ENCODE measurements at regions of chr3 and their contacts with region 1.

Region 1: DNA sequence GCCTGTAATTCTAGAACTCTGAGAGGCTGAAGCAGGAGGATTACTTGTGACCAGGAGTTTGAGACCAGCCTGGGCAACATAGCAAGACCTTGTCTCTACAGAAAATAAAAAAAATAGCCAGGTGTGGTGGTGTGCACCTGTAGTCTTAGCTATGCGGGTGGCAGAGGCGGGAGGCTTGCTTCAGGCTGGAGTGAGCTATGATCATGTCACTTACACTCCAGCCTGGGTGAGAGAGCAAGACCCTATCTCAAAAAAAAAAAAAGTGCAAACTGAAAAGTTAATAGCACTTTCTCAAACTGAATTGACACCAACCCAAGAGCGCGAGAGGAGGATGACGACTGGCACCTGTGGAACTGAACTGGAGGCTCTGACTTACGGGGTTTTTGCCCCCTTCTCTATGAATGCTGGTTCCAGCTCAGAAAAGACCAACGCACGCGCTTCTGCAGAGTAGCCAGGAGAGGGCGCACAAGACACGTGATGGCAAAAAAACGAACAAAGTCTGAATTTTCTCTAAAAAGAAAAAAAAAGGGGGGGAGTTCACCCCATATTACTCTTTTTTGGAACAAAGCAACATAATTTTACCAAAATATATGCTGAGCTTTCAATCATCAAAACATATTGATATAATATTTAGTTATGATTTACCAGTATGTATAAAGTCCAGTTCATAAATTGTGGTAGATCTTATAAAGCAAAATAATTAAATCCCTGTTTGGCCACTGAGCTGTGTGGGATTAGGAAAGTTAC is 23.7 kb downstream of the CFAP92 start:
- DNase-seq: no peak
- ATAC-seq: peak; percentile 82
- H3K4me3 ChIP-seq: no peak overlapping the region
- H3K27ac ChIP-seq: no peak overlapping the region
- H3K4me1 ChIP-seq: no peaks in the 10 kb centered on the region
- H3K27me3 ChIP-seq: peaks cover 0 to 2% of the 10 kb centered on the region in 2 experiments; a peak in 1 of 4 replicates
- CTCF ChIP-seq: peak; percentile 87 to 91 (median 89)
- EP300 ChIP-seq: no peak
- POLR2A ChIP-seq: no peak
- RAD21 ChIP-seq: peak; percentile 94

Region 2: GRCh38 chr3:128598884-128599664 is 371.1 kb before region 1 on chr3:
- CTCF ChIA-PET with region 1: no interaction called
- POLR2A ChIA-PET with region 1: no interaction called
- RAD21 ChIA-PET with region 1: no interaction called
- SMC1A ChIA-PET with region 1: no interaction called
- in situ Hi-C with region 1: no loop called
- intact Hi-C with region 1: no loop called
- DNase-seq: no peak
- ATAC-seq: no peak
- H3K4me3 ChIP-seq: no peak overlapping the region
- H3K27ac ChIP-seq: no peak overlapping the region
- H3K4me1 ChIP-seq: no peaks in the 10 kb centered on the region; the same call in 1 of the 2 replicates
- H3K27me3 ChIP-seq: no peaks in the 10 kb centered on the region
- CTCF ChIP-seq: no peak
- EP300 ChIP-seq: no peak
- POLR2A ChIP-seq: no peak
- RAD21 ChIP-seq: no peak

Region 3: GRCh38 chr3:128984596-128984995 is 14.4 kb after region 1 on chr3:
- CTCF ChIA-PET with region 1: interaction called, 17 read pairs
- POLR2A ChIA-PET with region 1: no interaction called
- RAD21 ChIA-PET with region 1: interaction called, 5 read pairs
- SMC1A ChIA-PET with region 1: interaction called, 3 read pairs
- in situ Hi-C with region 1: no loop called
- intact Hi-C with region 1: no loop called
- DNase-seq: no peak
- ATAC-seq: no peak
- H3K4me3 ChIP-seq: no peak overlapping the region
- H3K27ac ChIP-seq: no peak overlapping the region
- H3K4me1 ChIP-seq: no peaks in the 10 kb centered on the region
- H3K27me3 ChIP-seq: peaks cover 0 to 1% of the 10 kb centered on the region in 2 experiments; a peak in 1 of 4 replicates
- CTCF ChIP-seq: no peak
- EP300 ChIP-seq: no peak
- POLR2A ChIP-seq: no peak
- RAD21 ChIP-seq: no peak

Region 4: GRCh38 chr3:129026728-129027543 is 56.8 kb after region 1 on chr3:
- CTCF ChIA-PET with region 1: interaction called, 10 read pairs
- POLR2A ChIA-PET with region 1: no interaction called
- RAD21 ChIA-PET with region 1: no interaction called
- SMC1A ChIA-PET with region 1: interaction called, 6 read pairs
- in situ Hi-C with region 1: no loop called
- intact Hi-C with region 1: no loop called
- DNase-seq: peak; percentile 53
- ATAC-seq: peak; percentile 100
- H3K4me3 ChIP-seq: peak overlapping the region; percentile 74
- H3K27ac ChIP-seq: no peak overlapping the region
- H3K4me1 ChIP-seq: peaks cover 5% of the 10 kb centered on the region
- H3K27me3 ChIP-seq: peaks cover 0 to 4% of the 10 kb centered on the region in 2 experiments; a peak in 1 of 4 replicates
- CTCF ChIP-seq: peak; percentile 39 to 73 (median 64); a peak in 5 of 6 replicates
- EP300 ChIP-seq: no peak
- POLR2A ChIP-seq: peak; percentile 77
- RAD21 ChIP-seq: no peak

Region 5: GRCh38 chr3:129058441-129059200 is 88.5 kb after region 1 on chr3:
- CTCF ChIA-PET with region 1: interaction called, 31 read pairs
- POLR2A ChIA-PET with region 1: no interaction called
- RAD21 ChIA-PET with region 1: interaction called, 16 read pairs
- SMC1A ChIA-PET with region 1: interaction called, 20 read pairs
- in situ Hi-C with region 1: no loop called
- intact Hi-C with region 1: loop called (anchors 1 kb)
- DNase-seq: peak; percentile 48
- ATAC-seq: peak; percentile 82
- H3K4me3 ChIP-seq: no peak overlapping the region
- H3K27ac ChIP-seq: no peak overlapping the region
- H3K4me1 ChIP-seq: 0 out of 2 replicates have a peak, but pooled peaks cover 3% of the 10 kb centered on the region
- H3K27me3 ChIP-seq: no peaks in the 10 kb centered on the region; a peak in 1 of 4 replicates
- CTCF ChIP-seq: no peak
- EP300 ChIP-seq: no peak
- POLR2A ChIP-seq: no peak
- RAD21 ChIP-seq: no peak

Region 6: GRCh38 chr3:129224984-129225393 is 254.8 kb after region 1 on chr3:
- CTCF ChIA-PET with region 1: interaction called, 10 read pairs
- POLR2A ChIA-PET with region 1: no interaction called
- RAD21 ChIA-PET with region 1: interaction called, 8 read pairs
- SMC1A ChIA-PET with region 1: no interaction called
- in situ Hi-C with region 1: no loop called
- intact Hi-C with region 1: no loop called
- DNase-seq: no peak
- ATAC-seq: peak; percentile 68
- H3K4me3 ChIP-seq: no peak overlapping the region
- H3K27ac ChIP-seq: no peak overlapping the region
- H3K4me1 ChIP-seq: no peaks in the 10 kb centered on the region; the same call in 1 of the 2 replicates
- H3K27me3 ChIP-seq: no peaks in the 10 kb centered on the region
- CTCF ChIP-seq: no peak
- EP300 ChIP-seq: no peak
- POLR2A ChIP-seq: no peak
- RAD21 ChIP-seq: no peak

Region 7: GRCh38 chr3:129316131-129317013 is 346.2 kb after region 1 on chr3:
- CTCF ChIA-PET with region 1: interaction called, 17 read pairs
- POLR2A ChIA-PET with region 1: no interaction called
- RAD21 ChIA-PET with region 1: interaction called, 14 read pairs
- SMC1A ChIA-PET with region 1: interaction called, 9 read pairs
- in situ Hi-C with region 1: no loop called
- intact Hi-C with region 1: no loop called
- DNase-seq: no peak
- ATAC-seq: peak; percentile 56
- H3K4me3 ChIP-seq: peak overlapping the region; percentile 88
- H3K27ac ChIP-seq: peak overlapping the region; percentile 41; the same call in 1 of the 2 replicates
- H3K4me1 ChIP-seq: peaks cover 16% of the 10 kb centered on the region
- H3K27me3 ChIP-seq: peaks cover 0 to 3% of the 10 kb centered on the region in 2 experiments; a peak in 2 of 4 replicates
- CTCF ChIP-seq: peak; percentile 61 to 76 (median 71)
- EP300 ChIP-seq: peak in 1 of 2 experiments; percentile 22; a peak in 1 of 4 replicates
- POLR2A ChIP-seq: peak; percentile 87
- RAD21 ChIP-seq: peak; percentile 52

Measured in GM12878 (cell line).